ENCODE measurements at regions of chr3 and their contacts with region 1.

Region 1: GRCh38 chr3:47836986-47837385 is 34.0 kb downstream of the DHX30 start:
- DNase-seq: no peak
- H3K4me3 Mint-ChIP-seq: no peak overlapping the region
- H3K27ac Mint-ChIP-seq: no peak overlapping the region
- H3K4me1 Mint-ChIP-seq: no peaks in the 10 kb centered on the region
- H3K27me3 Mint-ChIP-seq: no peaks in the 10 kb centered on the region

Region 2: GRCh38 chr3:48157950-48158376 is 321.0 kb after region 1 on chr3:
- CTCF ChIA-PET with region 1: interaction called, 25 read pairs
- DNase-seq: peak; percentile 70
- H3K4me3 Mint-ChIP-seq: no peak overlapping the region
- H3K27ac Mint-ChIP-seq: no peak overlapping the region
- H3K4me1 Mint-ChIP-seq: no peaks in the 10 kb centered on the region
- H3K27me3 Mint-ChIP-seq: no peaks in the 10 kb centered on the region